Vagina (tissue), 2 donors: ENCODE measurements at regions of chr3 and their contacts with region 1.

Region 1: DNA sequence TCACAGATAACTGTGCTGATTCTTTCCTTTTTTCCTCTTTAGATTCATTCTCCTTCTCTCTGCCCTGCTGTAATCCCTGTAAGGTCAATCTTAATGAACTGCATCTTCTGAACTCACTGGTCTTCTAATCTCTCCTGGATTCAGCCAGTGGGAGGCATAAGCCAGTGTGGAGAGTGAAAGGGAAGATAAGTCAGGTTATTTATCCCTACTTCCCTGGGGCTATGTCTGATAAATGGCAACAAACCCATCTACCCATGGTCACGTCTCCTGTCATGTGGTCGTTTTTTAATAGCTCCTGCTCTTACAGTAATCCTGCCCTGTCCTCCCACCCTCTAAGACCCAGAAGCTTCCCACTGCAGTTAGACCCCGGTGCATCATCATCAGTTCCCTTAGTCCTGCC is 199.6 kb upstream of the NAALADL2 start:
- DNase-seq: no peak
- H3K4me3 ChIP-seq: no peak overlapping the region
- H3K27ac ChIP-seq: no peak overlapping the region
- H3K4me1 ChIP-seq: no peaks in the 10 kb centered on the region
- H3K27me3 ChIP-seq: no peaks in the 10 kb centered on the region
- CTCF ChIP-seq: no peak
- POLR2A ChIP-seq: no peak

Region 2: DNA sequence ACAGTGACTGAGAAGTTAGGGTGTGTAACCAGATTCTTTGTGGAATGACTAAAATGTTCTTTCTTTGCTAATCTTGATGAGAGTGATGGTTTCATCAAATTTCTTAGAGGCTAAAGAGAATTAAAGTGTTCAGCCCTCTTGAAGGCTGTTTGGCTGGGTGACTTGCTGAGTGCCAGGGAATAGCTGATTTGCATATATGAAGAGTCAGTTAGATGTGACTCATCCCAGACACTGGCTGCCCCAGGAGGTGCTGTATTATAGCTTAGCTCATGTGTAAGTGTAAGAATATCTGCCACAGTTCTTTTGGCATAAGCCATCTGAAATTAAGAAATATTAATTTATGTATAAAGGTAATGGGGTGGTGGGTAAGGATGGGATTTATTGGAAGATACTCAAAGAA is 726.9 kb before region 1 on chr3:
- intact Hi-C with region 1: loop called (anchors 5 kb)
- DNase-seq: no peak
- H3K4me3 ChIP-seq: no peak overlapping the region
- H3K27ac ChIP-seq: no peak overlapping the region
- H3K4me1 ChIP-seq: no peaks in the 10 kb centered on the region
- H3K27me3 ChIP-seq: no peaks in the 10 kb centered on the region
- CTCF ChIP-seq: no peak
- POLR2A ChIP-seq: no peak

Region 3: DNA sequence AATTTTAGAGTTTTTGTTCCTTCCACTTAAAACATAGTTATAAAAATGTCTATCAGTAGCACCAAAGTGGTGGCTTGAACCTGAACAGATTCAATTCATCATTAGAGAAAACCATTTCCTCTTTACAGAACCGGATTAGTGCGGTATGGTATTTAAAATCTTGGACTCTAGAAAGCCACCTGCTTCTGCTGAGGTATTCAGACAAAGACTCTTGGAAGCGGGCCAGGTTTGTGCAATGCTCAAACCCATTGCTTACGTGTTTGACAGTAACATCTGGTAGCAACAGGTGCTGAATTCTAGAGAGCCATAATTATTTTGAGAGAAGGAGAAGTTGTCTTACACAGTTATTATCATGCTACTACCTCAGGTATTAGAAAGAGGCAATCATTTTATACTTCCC is 490.2 kb after region 1 on chr3:
- intact Hi-C with region 1: no loop called
- DNase-seq: no peak
- H3K4me3 ChIP-seq: no peak overlapping the region
- H3K27ac ChIP-seq: no peak overlapping the region
- H3K4me1 ChIP-seq: no peaks in the 10 kb centered on the region
- H3K27me3 ChIP-seq: no peaks in the 10 kb centered on the region
- CTCF ChIP-seq: no peak
- POLR2A ChIP-seq: no peak